ENCODE measurements at regions of chr6 and their contacts with region 1.

Region 1: GRCh38 chr6:28838634-28839442 is 84.9 kb downstream of the TRIM27 start:
- DNase-seq: peak; percentile 92
- H3K4me3 ChIP-seq: peak overlapping the region; percentile 76
- H3K27ac ChIP-seq: peak overlapping the region; percentile 84
- H3K4me1 ChIP-seq: peaks cover 23% of the 10 kb centered on the region
- CTCF ChIP-seq: peak; percentile 88

Region 2: DNA sequence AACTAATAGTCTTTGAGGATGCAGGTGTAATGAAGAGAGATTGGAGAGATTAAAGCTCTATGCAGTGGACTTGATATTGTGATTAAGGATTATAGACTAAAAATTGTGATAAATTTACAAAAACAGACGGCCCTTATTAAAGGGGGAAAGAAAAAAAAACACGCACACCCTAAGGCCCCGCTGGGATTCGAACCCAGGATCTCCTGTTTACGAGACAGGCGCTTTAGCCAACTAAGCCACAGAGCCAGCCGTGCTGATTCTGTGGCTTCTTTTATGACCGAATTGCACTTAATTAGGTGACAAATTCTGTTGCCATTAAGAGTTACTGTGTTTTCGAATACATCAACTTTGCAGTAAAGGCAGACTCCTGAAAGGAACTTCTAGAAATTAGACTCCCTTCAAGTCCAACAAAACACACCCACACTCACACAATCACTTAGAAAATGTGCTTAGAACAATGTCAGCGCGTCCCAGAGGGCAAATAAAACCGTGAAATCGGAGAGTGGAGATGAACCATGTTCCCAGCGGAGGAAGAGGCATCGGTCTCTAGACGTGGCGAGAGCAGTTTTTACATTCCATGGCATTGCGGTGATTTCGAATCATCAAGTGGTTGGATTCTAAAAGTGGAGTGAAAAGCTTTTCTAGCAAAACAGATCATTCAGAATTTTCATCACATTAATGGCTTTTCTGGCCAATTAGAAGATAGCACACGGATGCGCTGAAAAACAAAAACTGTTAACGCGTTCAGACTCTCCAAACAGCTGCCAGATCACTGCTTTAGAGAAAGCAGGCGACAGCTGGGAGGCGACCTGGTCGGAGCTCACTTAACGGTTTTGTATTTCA is 190.6 kb before region 1 on chr6:
- CTCF ChIA-PET with region 1: no interaction called
- POLR2A ChIA-PET with region 1: no interaction called
- intact Hi-C with region 1: loop called (anchors 2 kb)
- DNase-seq: peak; percentile 89
- H3K4me3 ChIP-seq: peak overlapping the region; percentile 96
- H3K27ac ChIP-seq: peak overlapping the region; percentile 85
- H3K4me1 ChIP-seq: peaks cover 9% of the 10 kb centered on the region
- CTCF ChIP-seq: no peak

Region 3: GRCh38 chr6:28729501-28730402 is 109.1 kb before region 1 on chr6:
- CTCF ChIA-PET with region 1: interaction called, 3 read pairs
- POLR2A ChIA-PET with region 1: interaction called, 3 read pairs
- intact Hi-C with region 1: loop called (anchors 1 kb)
- DNase-seq: no peak
- H3K4me3 ChIP-seq: peak overlapping the region; percentile 71
- H3K27ac ChIP-seq: no peak overlapping the region
- H3K4me1 ChIP-seq: peaks cover 19% of the 10 kb centered on the region
- CTCF ChIP-seq: no peak

Region 4: DNA sequence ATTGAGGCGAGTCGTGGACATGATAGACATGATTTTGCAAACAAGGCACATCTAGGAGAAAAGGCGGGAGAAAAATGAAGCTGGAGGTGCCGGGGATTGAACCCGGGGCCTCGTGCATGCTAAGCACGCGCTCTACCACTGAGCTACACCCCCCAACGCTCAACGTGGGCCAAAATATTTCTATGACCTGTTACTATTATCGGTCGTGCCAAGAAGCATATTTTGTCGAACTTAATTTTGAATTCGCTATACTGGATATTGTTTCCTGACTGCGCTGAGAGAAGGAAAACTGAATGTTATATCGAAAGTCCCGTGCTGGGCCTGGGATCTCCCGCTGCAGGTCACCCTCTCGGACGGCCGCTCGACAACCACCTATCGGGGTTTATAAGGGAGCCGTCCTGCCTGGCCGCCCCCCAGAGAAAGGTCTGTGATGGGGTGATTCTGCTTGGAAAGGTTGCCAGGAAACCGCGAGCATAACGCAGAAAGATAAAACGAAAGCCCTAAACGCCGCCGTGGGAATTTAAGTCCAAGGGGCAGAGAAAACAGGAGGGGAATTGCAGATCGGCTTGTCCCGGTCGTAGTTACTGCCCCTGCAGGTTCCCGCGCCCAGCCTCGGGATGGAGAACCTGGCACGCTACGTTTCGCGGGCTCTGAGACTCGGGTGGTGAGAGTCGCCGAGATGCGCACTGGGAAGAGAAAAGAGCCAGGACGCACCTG is 24.9 kb after region 1 on chr6:
- CTCF ChIA-PET with region 1: no interaction called
- POLR2A ChIA-PET with region 1: interaction called, 13 read pairs
- intact Hi-C with region 1: no loop called
- DNase-seq: peak; percentile 79
- H3K4me3 ChIP-seq: peak overlapping the region; percentile 80
- H3K27ac ChIP-seq: peak overlapping the region; percentile 37
- H3K4me1 ChIP-seq: peaks cover 37% of the 10 kb centered on the region
- CTCF ChIP-seq: no peak

Region 5: GRCh38 chr6:28940858-28941680 is 102.2 kb after region 1 on chr6:
- CTCF ChIA-PET with region 1: no interaction called
- POLR2A ChIA-PET with region 1: interaction called, 4 read pairs
- intact Hi-C with region 1: loop called (anchors 1 kb)
- DNase-seq: peak; percentile 57
- H3K4me3 ChIP-seq: peak overlapping the region; percentile 48
- H3K27ac ChIP-seq: no peak overlapping the region
- H3K4me1 ChIP-seq: peaks cover 35% of the 10 kb centered on the region
- CTCF ChIP-seq: no peak

Region 6: DNA sequence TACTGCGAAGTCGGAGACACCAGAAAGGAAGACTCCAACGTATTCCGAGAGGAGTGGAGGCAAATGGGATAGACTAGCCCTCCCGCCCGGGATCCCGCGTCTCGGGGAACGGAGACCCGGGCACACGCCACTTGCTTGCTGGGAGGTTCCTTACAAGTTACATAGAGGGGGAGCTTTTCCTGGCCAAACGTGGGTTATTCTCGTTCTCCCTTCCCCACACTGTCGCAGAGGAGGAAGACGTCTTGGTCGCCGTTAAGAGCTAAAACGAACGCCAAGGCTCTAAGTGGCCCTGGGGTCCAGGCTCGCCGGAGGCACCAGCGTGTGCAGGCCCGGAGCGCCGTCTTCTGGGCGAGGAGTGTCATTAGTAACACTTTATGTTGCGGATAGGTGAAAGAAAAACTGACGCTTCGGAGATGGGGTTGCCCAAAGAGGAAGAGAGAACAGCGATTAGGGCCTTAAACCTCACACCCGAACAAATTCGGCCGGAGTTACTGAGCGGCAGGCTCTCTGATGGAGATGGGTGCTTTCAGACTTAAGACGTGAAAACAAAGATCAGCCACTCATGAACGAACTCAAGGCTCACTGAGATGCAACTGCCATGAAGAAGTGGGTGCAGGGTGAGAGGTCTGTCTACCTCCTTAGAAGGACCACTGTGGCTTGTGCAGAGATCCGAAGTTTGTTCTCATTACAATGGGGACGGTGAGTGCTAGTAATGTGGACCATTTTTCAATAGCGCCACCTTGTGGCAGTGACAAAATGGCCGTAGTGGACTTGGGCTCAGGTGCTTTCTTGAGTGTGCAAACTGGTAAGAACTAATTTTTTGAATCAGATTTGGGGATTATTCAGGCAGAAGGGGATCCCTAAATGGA is 178.0 kb after region 1 on chr6:
- CTCF ChIA-PET with region 1: interaction called, 8 read pairs
- POLR2A ChIA-PET with region 1: interaction called, 5 read pairs
- intact Hi-C with region 1: loop called (anchors 1 kb)
- DNase-seq: peak; percentile 90
- H3K4me3 ChIP-seq: peak overlapping the region; percentile 67
- H3K27ac ChIP-seq: peak overlapping the region; percentile 56
- H3K4me1 ChIP-seq: no peaks in the 10 kb centered on the region
- CTCF ChIP-seq: peak; percentile 97

Region 7: GRCh38 chr6:29071831-29072723 is 233.2 kb after region 1 on chr6:
- CTCF ChIA-PET with region 1: no interaction called
- POLR2A ChIA-PET with region 1: no interaction called
- intact Hi-C with region 1: no loop called
- DNase-seq: peak; percentile 12
- H3K4me3 ChIP-seq: no peak overlapping the region
- H3K27ac ChIP-seq: no peak overlapping the region
- H3K4me1 ChIP-seq: no peaks in the 10 kb centered on the region
- CTCF ChIP-seq: peak; percentile 63

Measured in OCI-LY7 (cell line).